Activated B cell treated with CpG ODN at 0.5 μM for 24 hours (primary cell): ENCODE measurements at regions of chr15 and their contacts with region 1.

Region 1: DNA sequence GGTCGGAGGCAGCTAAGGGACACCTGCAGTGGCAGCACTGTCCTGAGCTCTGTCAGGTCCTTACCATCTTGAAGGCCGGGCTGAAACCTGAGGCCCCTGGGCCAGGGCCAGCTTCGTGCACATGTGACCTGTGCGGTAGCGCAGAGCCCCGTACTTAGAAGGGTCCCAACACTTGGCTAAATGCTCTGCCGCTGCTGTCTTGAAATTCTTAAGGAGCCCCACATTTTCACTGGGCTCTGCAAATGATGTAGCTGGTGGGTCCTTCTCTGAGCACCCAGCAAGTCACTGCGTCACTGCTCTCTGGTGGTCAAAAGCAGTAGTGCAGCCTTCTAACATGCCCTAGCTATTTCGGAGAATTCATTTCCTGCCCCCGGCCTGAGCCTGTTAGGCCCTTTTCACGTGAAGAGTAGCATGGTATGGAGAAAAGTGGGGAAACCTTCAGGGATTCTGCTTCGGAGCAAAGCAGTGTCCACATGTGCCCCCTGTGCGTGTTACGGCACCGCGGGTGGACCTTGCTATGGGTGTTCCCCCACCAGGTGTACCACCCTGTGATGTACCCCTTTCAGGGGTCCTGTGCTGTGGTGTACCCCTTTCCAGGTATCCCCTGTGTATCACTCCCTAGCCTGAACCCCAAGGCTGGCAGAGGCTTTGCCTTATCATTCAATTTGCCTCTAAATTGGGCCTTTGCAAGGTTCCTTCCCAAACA is 79.7 kb downstream of the TMEM266 start:
- DNase-seq: peak; percentile 59
- ATAC-seq: peak; percentile 98
- H3K4me3 Mint-ChIP-seq: no peak overlapping the region
- H3K27ac Mint-ChIP-seq: no peak overlapping the region
- H3K4me1 Mint-ChIP-seq: peaks cover 2% of the 10 kb centered on the region
- H3K27me3 Mint-ChIP-seq: peaks cover 24% of the 10 kb centered on the region
- CTCF ChIP-seq: peak; percentile 56

Region 2: DNA sequence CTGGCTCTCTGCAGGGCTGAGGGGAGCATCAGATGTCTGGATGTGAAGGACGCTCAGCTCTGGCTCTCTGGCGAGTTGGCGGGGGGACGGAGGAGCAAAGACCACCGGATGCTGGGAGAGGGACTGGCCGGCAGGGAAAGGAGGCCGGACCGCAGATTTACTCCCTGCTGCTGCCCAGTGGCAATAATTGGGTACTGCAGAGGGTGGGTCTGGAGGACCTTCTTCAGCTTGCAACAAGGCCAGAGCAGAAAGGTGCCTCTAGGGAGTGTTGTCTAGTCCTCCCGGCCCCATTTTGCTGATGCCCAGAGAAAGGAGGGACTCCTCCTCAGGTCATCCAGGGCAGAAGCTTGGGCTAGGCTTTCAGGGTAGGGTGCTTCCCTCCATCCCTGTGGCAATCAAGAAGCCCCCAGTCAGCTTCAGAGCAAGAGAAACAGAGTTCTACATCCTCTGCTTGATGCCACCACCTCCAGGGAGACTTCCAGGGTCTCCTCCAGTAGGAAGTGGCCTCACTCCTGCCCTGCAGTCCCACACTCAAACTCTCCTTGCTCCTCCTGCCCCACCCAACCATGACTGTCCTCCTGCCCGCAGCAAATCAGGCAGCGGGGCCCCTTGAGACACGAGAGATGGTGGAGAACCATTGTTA is 406.6 kb before region 1 on chr15:
- CTCF ChIA-PET with region 1: interaction called, 19 read pairs
- POLR2A ChIA-PET with region 1: no interaction called
- intact Hi-C with region 1: loop called (anchors 1 kb)
- DNase-seq: peak; percentile 48
- ATAC-seq: peak; percentile 78
- H3K4me3 Mint-ChIP-seq: no peak overlapping the region
- H3K27ac Mint-ChIP-seq: no peak overlapping the region
- H3K4me1 Mint-ChIP-seq: peaks cover 19% of the 10 kb centered on the region
- H3K27me3 Mint-ChIP-seq: peaks cover 9% of the 10 kb centered on the region
- CTCF ChIP-seq: no peak

Region 3: GRCh38 chr15:75801859-75802593 is 337.5 kb before region 1 on chr15:
- CTCF ChIA-PET with region 1: interaction called, 11 read pairs
- POLR2A ChIA-PET with region 1: no interaction called
- intact Hi-C with region 1: no loop called
- DNase-seq: peak; percentile 63
- ATAC-seq: peak; percentile 100
- H3K4me3 Mint-ChIP-seq: peak overlapping the region; percentile 36
- H3K27ac Mint-ChIP-seq: no peak overlapping the region
- H3K4me1 Mint-ChIP-seq: peaks cover 4% of the 10 kb centered on the region
- H3K27me3 Mint-ChIP-seq: peaks cover 45% of the 10 kb centered on the region
- CTCF ChIP-seq: peak; percentile 55

Region 4: DNA sequence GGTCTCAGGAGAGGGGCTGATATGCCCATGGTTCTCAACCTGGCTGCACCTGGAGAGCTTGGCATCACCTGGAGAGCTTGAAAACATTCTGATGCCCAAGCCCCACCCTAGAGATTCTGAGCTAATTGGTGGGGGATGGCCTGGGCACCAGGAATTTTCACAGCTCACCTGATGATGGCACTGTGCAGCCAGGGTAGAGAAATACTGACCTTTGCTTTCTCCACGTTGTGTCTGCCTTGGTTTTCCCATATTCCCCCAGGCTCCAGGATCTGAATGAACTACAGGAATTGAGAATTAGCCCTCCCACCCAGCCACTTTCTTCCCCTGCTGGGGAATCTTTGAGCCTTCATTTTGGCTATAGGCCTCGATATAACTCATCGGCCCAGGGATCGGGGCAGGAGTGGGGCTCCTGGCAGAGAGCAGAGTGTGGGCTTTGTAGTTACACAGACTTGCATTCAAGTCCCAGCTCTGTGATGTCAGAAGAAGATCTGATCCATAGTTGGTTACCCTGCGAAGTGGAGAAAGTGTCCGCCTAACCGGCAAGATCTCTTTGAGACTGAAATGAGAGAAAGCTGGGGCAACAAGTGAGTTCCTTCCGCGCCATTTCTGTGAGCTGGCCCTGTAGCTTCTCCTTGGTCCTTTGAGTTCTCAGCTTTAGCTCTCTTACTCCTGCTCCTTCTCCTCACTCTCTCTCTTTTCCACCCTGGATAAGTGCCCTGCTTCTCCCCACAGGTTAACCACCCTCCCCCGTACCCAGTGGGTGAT is 329.4 kb before region 1 on chr15:
- CTCF ChIA-PET with region 1: interaction called, 64 read pairs
- POLR2A ChIA-PET with region 1: no interaction called
- intact Hi-C with region 1: no loop called
- DNase-seq: no peak
- ATAC-seq: peak; percentile 40
- H3K4me3 Mint-ChIP-seq: no peak overlapping the region
- H3K27ac Mint-ChIP-seq: no peak overlapping the region
- H3K4me1 Mint-ChIP-seq: no peaks in the 10 kb centered on the region
- H3K27me3 Mint-ChIP-seq: peaks cover 28% of the 10 kb centered on the region
- CTCF ChIP-seq: no peak

Region 5: GRCh38 chr15:75928680-75929608 is 210.6 kb before region 1 on chr15:
- CTCF ChIA-PET with region 1: interaction called, 61 read pairs
- POLR2A ChIA-PET with region 1: no interaction called
- intact Hi-C with region 1: loop called (anchors 1 kb)
- DNase-seq: no peak
- ATAC-seq: no peak
- H3K4me3 Mint-ChIP-seq: no peak overlapping the region
- H3K27ac Mint-ChIP-seq: no peak overlapping the region
- H3K4me1 Mint-ChIP-seq: peaks cover 36% of the 10 kb centered on the region
- H3K27me3 Mint-ChIP-seq: no peaks in the 10 kb centered on the region
- CTCF ChIP-seq: no peak

Region 6: GRCh38 chr15:76057332-76058000 is 82.1 kb before region 1 on chr15:
- CTCF ChIA-PET with region 1: interaction called, 101 read pairs
- POLR2A ChIA-PET with region 1: interaction called, 3 read pairs
- intact Hi-C with region 1: loop called (anchors 1 kb)
- DNase-seq: no peak
- ATAC-seq: peak; percentile 62
- H3K4me3 Mint-ChIP-seq: peak overlapping the region; percentile 61
- H3K27ac Mint-ChIP-seq: peak overlapping the region; percentile 82
- H3K4me1 Mint-ChIP-seq: peaks cover 46% of the 10 kb centered on the region
- H3K27me3 Mint-ChIP-seq: peaks cover 10% of the 10 kb centered on the region
- CTCF ChIP-seq: no peak

Region 7: DNA sequence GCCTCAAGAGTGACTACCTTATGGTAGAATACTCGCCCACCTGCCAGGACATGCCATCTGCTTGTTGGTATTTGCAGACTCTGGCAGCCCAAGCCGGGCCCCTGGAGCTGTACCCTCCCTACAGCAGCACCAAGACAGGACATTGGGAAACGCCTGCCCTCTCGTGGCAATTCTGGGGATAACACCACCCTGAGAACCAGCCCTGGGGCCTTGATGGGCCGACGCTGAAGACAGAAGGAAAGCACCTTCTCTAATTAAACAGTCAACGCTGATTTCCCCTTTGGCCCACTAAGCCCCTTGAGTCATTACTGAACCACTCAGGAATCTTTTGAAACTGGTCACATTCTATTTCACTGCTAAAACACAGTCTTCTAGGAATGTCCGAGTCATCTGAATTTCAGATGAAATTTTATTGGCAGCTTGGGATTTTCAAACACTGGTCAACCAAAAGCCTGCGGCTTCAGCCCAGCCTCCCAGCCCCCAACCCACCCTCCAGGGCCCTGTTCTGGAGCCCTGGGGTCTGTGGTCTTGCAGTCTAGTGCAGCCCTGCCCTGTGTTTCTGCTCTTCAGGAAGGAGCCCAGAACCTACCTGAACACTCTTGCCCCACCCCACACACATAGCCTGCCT is 11.6 kb after region 1 on chr15:
- CTCF ChIA-PET with region 1: interaction called, 37 read pairs
- POLR2A ChIA-PET with region 1: no interaction called
- intact Hi-C with region 1: no loop called
- DNase-seq: peak; percentile 75
- ATAC-seq: peak; percentile 95
- H3K4me3 Mint-ChIP-seq: no peak overlapping the region
- H3K27ac Mint-ChIP-seq: peak overlapping the region; percentile 41
- H3K4me1 Mint-ChIP-seq: peaks cover 18% of the 10 kb centered on the region
- H3K27me3 Mint-ChIP-seq: peaks cover 6% of the 10 kb centered on the region
- CTCF ChIP-seq: peak; percentile 41